Thyroid gland (tissue), 4 donors: ENCODE measurements at regions of chr22 and their contacts with region 1.

Region 1: GRCh38 chr22:20568989-20569769 is 61.8 kb downstream of the MED15 start:
- DNase-seq: peak; percentile 96 to 97
- H3K4me3 ChIP-seq: no peak overlapping the region
- H3K27ac ChIP-seq: peak overlapping the region; percentile 72 to 76 (median 74)
- H3K4me1 ChIP-seq: peaks cover 41 to 56% of the 10 kb centered on the region in 2 donors
- H3K27me3 ChIP-seq: no peaks in the 10 kb centered on the region
- CTCF ChIP-seq: no peak
- POLR2A ChIP-seq: no peak

Region 2: DNA sequence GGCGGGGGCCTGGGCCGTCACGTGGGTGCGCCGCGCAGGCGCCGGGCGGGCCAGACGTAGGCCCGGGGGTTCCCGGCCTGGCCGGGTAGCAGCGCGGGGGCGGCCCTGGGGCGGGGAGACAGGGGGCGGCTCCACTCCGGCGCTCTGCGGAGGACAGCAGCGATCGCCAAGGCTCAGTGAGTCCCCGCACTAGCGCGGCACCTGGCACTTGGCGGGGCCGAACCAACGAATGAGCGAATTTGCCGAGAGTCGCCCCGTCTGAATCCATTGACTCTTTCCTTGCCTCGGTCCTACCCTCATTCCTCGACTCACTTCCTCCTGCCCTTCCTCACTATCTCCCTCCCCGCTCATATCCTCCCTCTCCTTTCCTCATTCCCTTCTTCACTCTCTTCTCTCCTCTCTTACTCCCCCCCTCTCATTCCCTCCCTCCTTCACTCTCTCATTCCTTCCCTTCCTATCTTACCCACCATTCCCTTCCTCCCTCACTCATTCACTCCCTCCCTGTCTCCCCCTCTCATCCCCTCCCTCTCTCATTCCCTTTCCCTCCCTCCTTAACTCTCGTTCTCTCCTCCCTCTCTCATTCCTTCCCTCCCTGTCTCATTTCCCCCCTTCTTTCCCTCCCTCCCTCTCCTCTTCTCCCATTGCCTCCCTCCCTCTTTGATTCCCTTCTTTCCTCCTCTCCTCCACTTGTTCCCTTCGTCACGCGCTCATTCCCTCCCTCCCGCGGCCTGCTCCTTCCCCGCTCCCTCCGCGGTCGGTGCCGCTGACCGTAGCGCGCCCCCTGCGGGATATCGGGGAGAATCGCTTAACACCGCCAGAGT is 73.1 kb before region 1 on chr22:
- intact Hi-C with region 1: loop called (anchors 5 kb)
- DNase-seq: peak; percentile 93 to 94
- H3K4me3 ChIP-seq: peak overlapping the region; percentile 10 to 78 (median 16)
- H3K27ac ChIP-seq: peak overlapping the region; percentile 87 to 92 (median 90)
- H3K4me1 ChIP-seq: peaks cover 7 to 17% of the 10 kb centered on the region in 2 donors
- H3K27me3 ChIP-seq: no peaks in the 10 kb centered on the region
- CTCF ChIP-seq: peak; percentile 74 to 91 (median 86)
- POLR2A ChIP-seq: peak in 1 of 2 donors; percentile 84

Region 3: DNA sequence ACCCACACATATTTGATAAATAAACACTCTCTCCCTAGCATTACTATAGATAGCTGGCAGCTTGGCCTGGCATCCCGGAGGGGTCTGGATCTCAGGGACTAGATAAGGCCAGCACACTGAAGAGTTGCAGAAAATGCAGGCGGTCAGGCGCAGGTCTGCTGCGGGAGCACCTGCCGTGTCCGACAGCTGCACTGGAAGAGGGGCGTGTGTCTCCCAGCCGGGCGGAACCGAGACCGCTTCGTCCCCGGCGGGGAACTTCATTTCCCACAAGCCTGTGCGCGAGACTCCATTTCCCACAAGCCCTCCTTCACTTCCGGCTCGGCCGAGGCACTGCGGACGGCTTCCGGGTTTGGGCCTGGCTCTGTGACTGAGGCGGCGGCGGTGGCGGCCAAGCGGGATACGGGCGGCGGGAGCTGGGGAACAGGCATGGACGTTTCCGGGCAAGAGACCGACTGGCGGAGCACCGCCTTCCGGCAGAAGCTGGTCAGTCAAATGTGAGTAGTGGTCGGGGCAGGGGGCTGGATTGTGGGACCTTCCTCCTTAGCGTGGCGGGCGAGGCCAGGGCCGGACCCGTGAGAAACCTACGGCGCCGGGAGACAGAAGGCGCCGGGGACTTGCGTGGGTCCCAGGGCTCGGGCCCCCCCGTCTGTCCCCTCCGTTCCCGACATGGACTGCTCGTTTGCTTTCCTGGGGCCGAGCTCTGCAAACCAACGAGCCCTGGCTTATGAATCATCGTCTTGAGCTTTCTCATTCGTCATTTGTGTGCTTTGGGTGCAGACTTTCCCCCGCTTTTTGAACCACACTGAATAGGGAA is 61.7 kb before region 1 on chr22 and contains the start of gene MED15:
- intact Hi-C with region 1: loop called (anchors 5 kb)
- DNase-seq: peak; percentile 88 to 91
- H3K4me3 ChIP-seq: peak within 1 kb of the TSS; percentile 72 to 96 (median 77)
- H3K27ac ChIP-seq: peak within 1 kb of the TSS; percentile 87 to 89 (median 87)
- H3K4me1 ChIP-seq: peaks cover 30 to 42% of the 10 kb centered on the region in 2 donors
- H3K27me3 ChIP-seq: no peaks in the 10 kb centered on the region
- CTCF ChIP-seq: peak in 1 of 6 experiments; percentile 9
- POLR2A ChIP-seq: peak in 1 of 2 donors; percentile 74
- total RNA-seq, gene MED15: 33.6 to 65.1 (median 36.1) TPM